ENCODE measurements at regions of chr2 and their contacts with region 1.

Region 1: GRCh38 chr2:85266146-85267041 is 61.4 kb downstream of the TGOLN2 start:
- DNase-seq: no peak
- H3K4me3 ChIP-seq: no peak overlapping the region
- CTCF ChIP-seq: peak; percentile 80

Region 2: GRCh38 chr2:85162746-85163301 is 103.6 kb before region 1 on chr2:
- CTCF ChIA-PET with region 1: interaction called, 10 read pairs
- POLR2A ChIA-PET with region 1: no interaction called
- DNase-seq: no peak
- H3K4me3 ChIP-seq: no peak overlapping the region
- CTCF ChIP-seq: no peak

Region 3: DNA sequence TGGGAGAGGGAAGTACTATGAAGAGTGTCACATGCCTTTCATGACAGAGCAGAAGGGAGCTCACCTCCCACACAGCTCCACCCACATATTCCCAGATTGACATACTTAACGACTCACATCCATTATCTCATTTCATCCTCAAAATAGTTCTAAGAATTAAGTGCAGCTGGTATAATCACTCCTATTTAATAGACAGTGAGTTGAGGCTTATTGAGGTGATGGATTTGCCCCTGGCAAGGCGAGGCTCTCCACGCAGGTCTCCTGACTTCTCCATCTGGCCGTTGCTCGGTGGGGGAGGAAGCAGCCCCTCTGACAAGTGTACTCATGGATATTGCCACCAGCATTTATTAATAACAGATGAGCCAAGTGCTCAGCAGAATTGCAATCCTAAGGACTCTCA is 20.0 kb before region 1 on chr2:
- CTCF ChIA-PET with region 1: interaction called, 19 read pairs
- POLR2A ChIA-PET with region 1: interaction called, 3 read pairs
- DNase-seq: no peak
- H3K4me3 ChIP-seq: no peak overlapping the region
- CTCF ChIP-seq: no peak

Region 4: GRCh38 chr2:85255813-85256594 is 10.4 kb before region 1 on chr2:
- CTCF ChIA-PET with region 1: interaction called, 37 read pairs
- POLR2A ChIA-PET with region 1: no interaction called
- DNase-seq: no peak
- H3K4me3 ChIP-seq: peak overlapping the region; percentile 36
- CTCF ChIP-seq: no peak

Measured in AG04449 (cell line).